ENCODE measurements at regions of chr2 and their contacts with region 1.

Region 1: DNA sequence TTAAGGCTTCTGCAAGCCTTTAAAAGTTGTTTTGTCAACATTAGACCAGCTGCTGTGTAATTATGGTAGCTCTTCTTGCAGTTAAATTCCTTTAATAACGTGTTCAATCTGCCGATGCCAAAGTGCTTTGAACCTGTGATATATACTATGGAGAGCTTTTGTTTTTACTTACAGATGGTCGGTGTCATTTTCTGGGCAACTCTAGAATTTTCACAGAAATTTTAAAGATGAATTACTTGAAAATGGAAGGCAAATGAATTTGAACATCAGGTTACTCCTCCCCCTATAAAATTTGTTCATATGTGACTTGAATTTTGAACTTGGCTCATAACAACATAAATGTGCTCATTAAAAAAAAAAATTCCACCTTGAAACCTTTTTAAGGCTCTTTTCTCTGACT is 23.0 kb downstream of the LYPD6 start:
- DNase-seq: no peak
- ATAC-seq: no peak
- H3K4me3 ChIP-seq: no peak overlapping the region
- H3K27ac ChIP-seq: no peak overlapping the region
- H3K4me1 ChIP-seq: no peaks in the 10 kb centered on the region
- H3K27me3 ChIP-seq: no peaks in the 10 kb centered on the region
- CTCF ChIP-seq: no peak
- POLR2A ChIP-seq: no peak
- RAD21 ChIP-seq: no peak

Region 2: DNA sequence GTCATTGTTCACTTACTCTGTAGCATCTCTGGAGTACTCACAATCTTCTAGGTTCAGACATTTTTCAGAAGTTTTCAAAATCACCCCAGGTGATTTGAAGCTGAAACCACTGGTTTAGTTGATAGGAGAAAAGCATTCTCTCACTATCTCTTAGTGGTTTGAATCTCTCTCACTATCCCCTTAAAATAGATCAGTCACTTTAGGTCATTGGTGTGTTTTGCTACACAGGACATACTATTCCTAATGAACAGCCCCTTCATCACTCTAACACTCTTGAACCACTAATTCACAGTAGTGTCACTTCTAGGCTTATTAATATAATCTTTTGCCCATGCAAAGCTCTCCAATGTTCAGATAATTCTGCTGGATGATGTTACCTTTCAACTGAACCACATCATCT is 11.4 kb after region 1 on chr2:
- CTCF ChIA-PET with region 1: no interaction called
- POLR2A ChIA-PET with region 1: interaction called, 10 read pairs
- dilution Hi-C with region 1: no loop called
- in situ Hi-C with region 1: no loop called
- intact Hi-C with region 1: no loop called
- DNase-seq: no peak
- ATAC-seq: no peak
- H3K4me3 ChIP-seq: no peak overlapping the region
- H3K27ac ChIP-seq: no peak overlapping the region
- H3K4me1 ChIP-seq: no peaks in the 10 kb centered on the region
- H3K27me3 ChIP-seq: no peaks in the 10 kb centered on the region
- CTCF ChIP-seq: no peak
- POLR2A ChIP-seq: no peak
- RAD21 ChIP-seq: no peak

Region 3: DNA sequence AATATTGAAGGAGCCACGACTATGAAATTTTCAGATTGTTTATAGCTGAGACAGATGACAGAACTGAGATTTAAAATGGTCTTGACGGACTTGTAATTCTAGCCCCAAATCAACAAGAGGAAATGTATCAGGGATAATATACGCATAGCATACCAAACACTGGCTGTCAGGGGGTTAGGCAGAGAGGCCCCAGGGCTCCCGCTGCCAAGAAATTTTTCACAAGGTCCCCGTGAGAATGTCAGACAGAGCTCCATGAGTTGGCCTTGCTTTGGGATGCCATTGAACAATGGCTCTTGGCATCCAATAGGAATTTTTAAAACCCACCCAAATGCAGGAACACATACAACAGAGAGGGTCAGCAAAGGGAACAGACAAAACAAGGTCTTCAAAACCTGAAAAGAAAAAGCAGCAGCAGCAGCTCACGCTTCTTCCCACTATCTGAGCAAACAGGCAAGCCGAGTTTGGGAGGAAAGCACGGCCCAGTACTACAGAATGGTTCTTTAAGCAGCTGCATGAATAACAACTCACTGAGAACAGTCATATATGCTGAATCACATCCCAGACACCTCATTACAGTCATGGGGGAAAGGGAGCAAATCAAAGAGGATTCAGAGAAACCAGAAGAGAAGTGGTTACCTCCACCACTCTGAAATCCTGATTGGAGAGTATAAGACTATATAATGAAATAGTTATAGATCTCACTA is 688.5 kb after region 1 on chr2:
- CTCF ChIA-PET with region 1: no interaction called
- POLR2A ChIA-PET with region 1: no interaction called
- dilution Hi-C with region 1: no loop called
- in situ Hi-C with region 1: no loop called
- intact Hi-C with region 1: no loop called
- DNase-seq: peak; percentile 86
- ATAC-seq: peak; percentile 90
- H3K4me3 ChIP-seq: no peak overlapping the region; the same call in 1 of the 2 replicates
- H3K27ac ChIP-seq: peak overlapping the region; percentile 10; the same call in 1 of the 2 replicates
- H3K4me1 ChIP-seq: peaks cover 6% of the 10 kb centered on the region; the same call in 1 of the 2 replicates
- H3K27me3 ChIP-seq: no peaks in the 10 kb centered on the region
- CTCF ChIP-seq: no peak
- POLR2A ChIP-seq: no peak
- RAD21 ChIP-seq: 0 out of 2 replicates have a peak, but pooled peaks have one; percentile 2